IMR-90 (cell line): ENCODE measurements at regions of chr17 and their contacts with region 1.

Region 1: GRCh38 chr17:30021708-30022317 is 80.4 kb downstream of the EFCAB5 start:
- DNase-seq: peak; percentile 61
- ATAC-seq: peak; percentile 87
- H3K4me3 ChIP-seq: no peak overlapping the region
- H3K27ac ChIP-seq: no peak overlapping the region
- H3K4me1 ChIP-seq: no peaks in the 10 kb centered on the region
- H3K27me3 ChIP-seq: peaks cover 6% of the 10 kb centered on the region; the same call in 1 of the 2 replicates
- CTCF ChIP-seq: peak; percentile 78
- POLR2A ChIP-seq: no peak
- RAD21 ChIP-seq: peak; percentile 75

Region 2: DNA sequence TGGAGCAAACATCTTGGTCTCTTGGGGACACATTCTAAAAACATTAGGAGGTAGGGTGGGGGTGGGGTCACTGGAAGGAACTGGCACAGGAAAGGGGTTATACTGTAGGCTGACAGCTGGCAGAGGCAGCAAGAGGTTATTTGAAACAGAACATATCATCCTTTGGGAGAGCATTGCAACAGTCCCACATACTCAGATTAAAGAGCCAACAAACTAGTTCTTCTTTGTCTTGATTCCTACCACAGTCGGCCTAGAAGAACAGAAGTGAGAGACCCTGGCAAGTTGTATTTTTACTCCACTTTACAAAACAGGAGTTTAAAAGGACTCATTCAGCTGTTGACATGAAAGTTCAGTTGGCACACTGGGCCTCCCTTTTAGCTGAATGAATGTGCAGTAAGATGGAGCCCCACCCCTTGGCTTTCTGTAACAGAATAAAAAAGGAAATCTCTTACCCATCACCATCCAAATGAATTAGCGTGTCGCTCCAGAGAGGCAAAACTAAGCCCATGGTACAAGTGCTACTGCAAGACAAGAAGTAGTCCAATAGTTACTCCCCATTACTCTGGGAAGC is 344.5 kb before region 1 on chr17:
- CTCF ChIA-PET with region 1: no interaction called
- POLR2A ChIA-PET with region 1: no interaction called
- dilution Hi-C with region 1: no loop called
- in situ Hi-C with region 1: no loop called
- intact Hi-C with region 1: no loop called
- DNase-seq: no peak
- ATAC-seq: no peak; the same call in 1 of the 2 replicates
- H3K4me3 ChIP-seq: no peak overlapping the region
- H3K27ac ChIP-seq: peak overlapping the region; percentile 9; the same call in 1 of the 2 replicates
- H3K4me1 ChIP-seq: peaks cover 4% of the 10 kb centered on the region
- H3K27me3 ChIP-seq: no peaks in the 10 kb centered on the region
- CTCF ChIP-seq: no peak
- POLR2A ChIP-seq: no peak
- RAD21 ChIP-seq: no peak

Region 3: DNA sequence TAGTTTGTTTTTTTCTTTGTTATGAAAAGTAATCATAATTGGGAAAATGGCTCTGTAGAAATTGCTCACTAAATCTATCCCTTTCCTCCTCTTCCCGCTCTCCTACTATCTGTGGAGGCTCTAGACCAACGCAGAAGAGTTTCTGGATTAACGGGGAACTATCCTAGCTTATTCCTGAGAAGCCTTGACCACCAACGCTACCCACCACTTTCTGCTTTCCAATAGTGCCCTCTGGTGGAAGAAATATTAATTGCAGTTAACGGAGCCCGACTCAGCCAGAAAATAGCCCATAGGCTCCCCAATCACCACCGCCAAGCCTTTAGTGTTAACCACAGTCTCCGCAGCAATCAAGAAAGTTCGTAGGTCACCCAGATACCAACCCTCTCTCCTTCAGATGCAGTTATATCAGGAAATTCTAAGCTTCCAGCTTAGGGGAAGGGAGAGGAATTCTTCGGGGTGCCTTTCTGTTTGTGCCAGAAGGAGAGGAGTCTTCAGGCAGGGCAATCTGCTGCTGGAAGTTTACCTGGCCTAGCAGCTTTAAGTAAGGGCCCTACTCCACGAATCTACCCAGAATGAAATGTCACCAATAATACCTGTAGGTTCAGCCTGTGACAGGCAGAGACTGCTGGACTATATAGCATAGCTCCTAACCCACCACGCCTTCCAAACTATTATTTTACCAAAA is 71.8 kb after region 1 on chr17:
- CTCF ChIA-PET with region 1: interaction called, 11 read pairs
- POLR2A ChIA-PET with region 1: no interaction called
- dilution Hi-C with region 1: no loop called
- in situ Hi-C with region 1: no loop called
- intact Hi-C with region 1: loop called (anchors 1 kb)
- DNase-seq: peak; percentile 58
- ATAC-seq: peak; percentile 76
- H3K4me3 ChIP-seq: no peak overlapping the region
- H3K27ac ChIP-seq: no peak overlapping the region
- H3K4me1 ChIP-seq: peaks cover 2% of the 10 kb centered on the region
- H3K27me3 ChIP-seq: no peaks in the 10 kb centered on the region
- CTCF ChIP-seq: peak; percentile 89
- POLR2A ChIP-seq: no peak
- RAD21 ChIP-seq: peak; percentile 94